Uterus (tissue), 4 donors: ENCODE measurements at regions of chr12 and their contacts with region 1.

Region 1: GRCh38 chr12:93742110-93742934 is 65.1 kb downstream of the CRADD start:
- DNase-seq: peak; percentile 82 to 87
- H3K4me3 ChIP-seq: peak overlapping the region; percentile 44 to 57
- H3K27ac ChIP-seq: peak overlapping the region; percentile 93 to 99
- H3K4me1 ChIP-seq: no peaks in the 10 kb centered on the region
- H3K27me3 ChIP-seq: no peaks in the 10 kb centered on the region
- CTCF ChIP-seq: peak; percentile 24 to 71 (median 56)
- POLR2A ChIP-seq: peak; percentile 11 to 48

Region 2: GRCh38 chr12:92729773-92730305 is 1012.5 kb before region 1 on chr12:
- intact Hi-C with region 1: no loop called
- DNase-seq: no peak
- H3K4me3 ChIP-seq: no peak overlapping the region
- H3K27ac ChIP-seq: no peak overlapping the region
- H3K4me1 ChIP-seq: no peaks in the 10 kb centered on the region
- H3K27me3 ChIP-seq: no peaks in the 10 kb centered on the region
- CTCF ChIP-seq: no peak
- POLR2A ChIP-seq: no peak

Region 3: GRCh38 chr12:93580682-93581081 is 161.6 kb before region 1 on chr12:
- intact Hi-C with region 1: no loop called
- DNase-seq: no peak
- H3K4me3 ChIP-seq: no peak overlapping the region
- H3K27ac ChIP-seq: peak overlapping the region; percentile 98 to 100
- H3K4me1 ChIP-seq: peaks cover 0 to 7% of the 10 kb centered on the region in 2 donors
- H3K27me3 ChIP-seq: no peaks in the 10 kb centered on the region
- CTCF ChIP-seq: no peak
- POLR2A ChIP-seq: no peak

Region 4: DNA sequence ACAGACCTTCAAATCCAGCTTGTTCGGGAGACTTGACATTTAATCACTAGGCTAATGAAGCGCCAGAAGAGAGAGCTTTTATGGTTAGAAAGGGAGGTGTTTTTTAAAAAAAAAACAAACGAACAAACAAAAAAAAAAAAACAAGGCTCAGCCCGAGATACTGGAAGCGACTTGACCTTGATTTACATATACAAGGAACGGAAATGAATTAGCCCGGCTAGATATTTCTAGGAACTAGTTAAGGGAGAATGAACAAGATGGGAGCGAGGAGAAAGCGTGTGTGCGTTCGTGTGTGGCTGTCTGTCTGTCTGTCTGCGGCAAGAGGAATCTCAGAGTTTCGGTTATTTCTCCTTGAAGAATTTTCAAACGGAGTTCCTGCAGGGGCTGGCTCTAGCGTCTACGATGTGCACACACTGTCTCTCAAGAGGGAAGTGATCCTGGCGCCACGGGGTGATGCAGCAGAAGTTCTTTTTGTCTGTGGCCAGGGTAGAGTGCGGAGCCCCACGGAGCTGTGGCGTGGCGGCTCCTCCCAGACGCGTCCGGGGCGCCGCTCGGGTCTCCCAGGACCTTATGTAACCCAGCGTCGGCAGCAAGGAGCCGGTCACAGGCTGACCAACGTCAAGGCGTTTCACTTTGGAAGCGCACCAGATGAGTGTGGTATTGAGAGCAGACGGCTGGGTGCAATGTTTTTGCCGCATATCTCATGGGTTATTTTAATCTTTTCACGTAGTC is 151.0 kb before region 1 on chr12:
- intact Hi-C with region 1: loop called (anchors 5 kb)
- DNase-seq: peak; percentile 78 to 86
- H3K4me3 ChIP-seq: peak overlapping the region; percentile 49 to 50
- H3K27ac ChIP-seq: peak overlapping the region; percentile 92 to 98
- H3K4me1 ChIP-seq: no peaks in the 10 kb centered on the region
- H3K27me3 ChIP-seq: no peaks in the 10 kb centered on the region
- CTCF ChIP-seq: no peak
- POLR2A ChIP-seq: peak; percentile 69 to 80

Region 5: DNA sequence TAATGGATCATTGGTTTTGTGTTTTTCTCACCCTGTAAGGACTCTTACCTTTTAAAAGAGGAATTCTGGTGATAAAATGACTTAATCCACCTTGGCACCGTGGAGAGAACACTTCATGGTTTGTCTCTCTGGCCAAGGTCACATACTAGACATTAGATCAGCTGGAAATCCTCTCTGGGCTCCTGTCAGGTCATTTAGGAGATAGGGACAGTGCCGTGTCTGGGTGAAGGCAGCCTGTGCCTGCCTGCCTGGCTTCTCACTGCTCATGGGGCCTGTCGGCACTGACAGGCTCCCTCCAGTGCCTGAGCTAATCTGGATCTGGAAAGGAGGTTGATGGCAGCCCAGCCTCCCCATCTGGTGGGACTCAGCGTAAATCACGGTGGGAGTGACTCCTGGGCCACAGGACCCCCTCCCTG is 59.5 kb before region 1 on chr12:
- intact Hi-C with region 1: loop called (anchors 10 kb)
- DNase-seq: peak; percentile 69 to 81
- H3K4me3 ChIP-seq: peak overlapping the region in 1 of 2 donors; percentile 8
- H3K27ac ChIP-seq: peak overlapping the region; percentile 98 to 99
- H3K4me1 ChIP-seq: peaks cover 5 to 13% of the 10 kb centered on the region in 2 donors
- H3K27me3 ChIP-seq: no peaks in the 10 kb centered on the region
- CTCF ChIP-seq: no peak
- POLR2A ChIP-seq: peak in 1 of 2 donors; percentile 33

Region 6: GRCh38 chr12:93699271-93700145 is 42.8 kb before region 1 on chr12:
- intact Hi-C with region 1: no loop called
- DNase-seq: no peak
- H3K4me3 ChIP-seq: no peak overlapping the region
- H3K27ac ChIP-seq: peak overlapping the region; percentile 70 to 90
- H3K4me1 ChIP-seq: peaks cover 0 to 8% of the 10 kb centered on the region in 2 donors
- H3K27me3 ChIP-seq: no peaks in the 10 kb centered on the region
- CTCF ChIP-seq: no peak
- POLR2A ChIP-seq: no peak

Region 7: DNA sequence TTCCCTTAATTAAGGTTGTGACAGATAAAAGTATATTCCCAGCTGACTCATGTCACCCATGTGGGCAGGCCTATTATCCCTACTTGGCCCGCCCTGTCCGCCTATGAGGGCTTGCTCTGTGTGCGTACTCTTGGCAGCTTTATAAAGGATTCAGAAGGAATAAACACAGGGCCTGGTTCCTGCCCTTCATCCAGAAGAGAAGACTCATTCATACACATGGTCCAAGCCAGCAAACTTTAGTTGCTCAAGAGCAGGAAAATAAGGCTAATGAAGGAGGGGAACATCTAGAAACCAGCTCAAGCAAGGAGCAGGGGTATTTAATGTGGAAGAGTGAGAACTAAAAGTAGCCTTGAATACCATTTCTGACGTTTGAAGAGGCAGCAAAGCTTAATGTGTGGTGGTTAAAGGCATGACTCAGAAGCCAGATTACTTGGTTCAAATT is 76.7 kb after region 1 on chr12:
- intact Hi-C with region 1: no loop called
- DNase-seq: peak; percentile 75 to 91
- H3K4me3 ChIP-seq: no peak overlapping the region
- H3K27ac ChIP-seq: peak overlapping the region; percentile 85 to 89
- H3K4me1 ChIP-seq: peaks cover 11 to 13% of the 10 kb centered on the region in 2 donors
- H3K27me3 ChIP-seq: no peaks in the 10 kb centered on the region
- CTCF ChIP-seq: no peak
- POLR2A ChIP-seq: peak in 1 of 2 donors; percentile 23